ENCODE measurements at regions of chr1 and their contacts with region 1.

Region 1: DNA sequence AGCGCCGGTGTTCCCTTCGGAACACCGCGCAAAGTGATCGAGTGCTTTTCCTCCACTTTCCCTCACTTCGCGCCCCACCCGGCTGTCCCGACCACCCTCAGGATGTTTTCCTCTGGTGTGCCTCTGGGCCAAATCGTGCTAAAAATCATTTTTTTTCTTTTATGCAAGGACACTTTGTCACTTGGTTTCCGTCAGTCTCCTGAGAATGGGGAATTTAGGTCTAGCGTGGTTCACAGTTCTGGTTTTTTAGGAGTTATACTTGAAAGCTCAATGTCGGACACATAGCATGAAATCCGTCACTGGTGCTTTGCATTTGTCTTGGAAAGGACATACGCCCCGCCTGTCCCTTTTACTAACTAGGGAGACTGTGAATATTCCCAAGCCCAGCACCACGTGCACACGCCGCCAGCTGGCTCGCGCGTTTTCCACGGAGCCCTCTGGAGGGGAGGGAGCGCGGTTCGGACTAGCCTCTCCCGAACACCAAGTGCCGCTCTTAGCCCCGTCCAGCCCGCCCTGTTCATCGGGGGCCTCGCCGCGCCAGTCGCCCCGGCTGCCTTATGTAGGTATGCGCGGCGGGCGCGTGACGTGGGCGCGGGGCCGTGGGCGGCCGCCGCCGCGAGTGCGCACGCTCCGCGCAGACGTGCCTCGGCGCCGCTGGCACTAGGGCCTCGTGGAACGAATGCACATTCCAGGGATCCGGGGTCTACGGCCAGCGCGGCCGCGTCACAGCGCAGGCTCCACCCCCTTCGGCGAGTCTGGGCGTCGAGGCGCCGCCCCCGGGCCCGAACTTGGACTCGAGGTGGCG is 572 bp upstream of the IRF2BP2 start:
- DNase-seq: peak; percentile 93
- CTCF ChIP-seq: no peak

Region 2: DNA sequence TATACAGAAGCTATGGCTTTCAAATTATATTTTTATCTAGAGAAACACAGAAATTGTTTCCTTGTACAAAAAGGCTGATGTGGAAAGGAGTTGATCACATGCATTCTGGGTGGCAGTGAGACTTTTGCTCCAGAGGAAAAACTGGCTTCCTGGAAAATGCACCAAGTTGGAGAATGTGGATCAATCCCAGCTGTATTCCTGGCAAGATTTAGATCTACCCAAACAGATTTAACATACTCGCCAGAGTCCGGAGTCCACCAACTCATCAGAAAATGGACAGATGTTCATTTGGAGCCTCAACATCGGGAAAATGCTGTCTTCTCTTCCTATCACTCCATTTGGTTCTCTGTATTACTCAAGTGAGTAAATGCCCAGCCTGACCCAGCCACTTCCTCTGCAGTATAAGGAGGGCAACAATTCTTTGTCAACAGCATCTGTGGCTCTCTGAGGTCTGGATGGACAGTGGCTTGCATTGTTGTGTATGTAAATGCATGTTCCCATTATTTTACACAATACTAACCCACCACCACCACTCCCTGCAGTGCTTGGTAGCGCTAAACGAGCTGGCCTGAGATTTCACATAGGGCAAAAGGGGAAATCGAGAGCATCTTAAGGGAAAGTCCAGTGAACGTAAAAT is 225.6 kb after region 1 on chr1:
- in situ Hi-C with region 1: loop called (anchors 10 kb)
- DNase-seq: no peak
- CTCF ChIP-seq: no peak

Region 3: GRCh38 chr1:234997201-234997895 is 386.8 kb after region 1 on chr1:
- in situ Hi-C with region 1: no loop called
- DNase-seq: no peak
- CTCF ChIP-seq: no peak